ENCODE measurements at regions of chr14 and their contacts with region 1.

Region 1: GRCh38 chr14:24160850-24161804 is at the start of gene IRF9:
- DNase-seq: peak; percentile 99
- ATAC-seq: peak; percentile 88
- H3K4me3 Mint-ChIP-seq: peak within 1 kb of the TSS; percentile 91
- H3K27ac Mint-ChIP-seq: peak within 1 kb of the TSS; percentile 99
- H3K4me1 Mint-ChIP-seq: peaks cover 39% of the 10 kb centered on the region
- H3K27me3 Mint-ChIP-seq: no peaks in the 10 kb centered on the region
- CTCF ChIP-seq: peak; percentile 81
- total RNA-seq, gene IRF9: 112 to 118 TPM

Region 2: GRCh38 chr14:23366426-23366921 is 794.7 kb before region 1 on chr14:
- CTCF ChIA-PET with region 1: no interaction called
- POLR2A ChIA-PET with region 1: no interaction called
- intact Hi-C with region 1: no loop called
- DNase-seq: no peak
- ATAC-seq: no peak
- H3K4me3 Mint-ChIP-seq: no peak overlapping the region
- H3K27ac Mint-ChIP-seq: no peak overlapping the region
- H3K4me1 Mint-ChIP-seq: no peaks in the 10 kb centered on the region
- H3K27me3 Mint-ChIP-seq: peaks cover 25% of the 10 kb centered on the region
- CTCF ChIP-seq: no peak

Region 3: DNA sequence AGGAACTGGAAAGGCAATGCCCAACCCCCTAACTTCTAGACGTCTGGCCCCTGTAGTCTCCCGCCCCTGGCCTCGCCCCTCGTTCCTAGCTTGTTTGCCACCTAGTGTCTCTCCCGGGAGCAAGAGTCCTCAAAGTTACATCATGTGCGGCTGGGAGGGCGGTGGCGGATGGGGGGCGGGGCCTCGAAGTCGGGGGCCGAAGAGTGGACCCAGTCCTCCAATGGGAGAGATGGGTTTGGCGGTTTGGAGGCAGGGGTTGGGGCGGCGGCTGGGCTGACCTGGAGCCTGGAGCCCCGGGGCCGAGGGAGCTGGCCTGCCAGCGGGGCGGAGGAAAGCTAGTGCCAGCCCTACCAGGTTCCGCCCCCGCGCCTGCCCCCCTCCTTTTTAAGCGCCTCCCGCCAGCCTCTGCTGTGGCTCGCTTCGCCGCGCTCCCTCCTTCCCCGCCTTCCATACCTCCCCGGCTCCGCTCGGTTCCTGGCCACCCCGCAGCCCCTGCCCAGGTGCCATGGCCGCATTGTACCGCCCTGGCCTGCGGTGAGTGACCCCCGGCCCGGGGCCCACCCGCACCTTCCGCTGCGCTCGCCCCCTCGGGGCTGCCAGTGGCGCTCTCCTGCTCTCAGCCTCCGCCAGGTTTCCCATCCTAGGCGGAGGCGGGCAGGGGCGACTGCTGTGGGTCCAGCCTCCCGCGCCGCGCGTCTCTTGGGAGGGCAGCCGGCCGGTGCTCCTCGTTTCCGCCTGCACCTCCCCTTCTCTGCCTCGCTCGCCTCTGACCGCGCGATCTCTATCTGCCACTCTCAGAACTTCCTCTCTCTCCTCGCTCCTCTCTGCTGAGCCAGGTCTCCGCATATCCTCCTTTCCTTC is 67.0 kb before region 1 on chr14 and contains the start of gene PCK2:
- CTCF ChIA-PET with region 1: interaction called, 6 read pairs
- POLR2A ChIA-PET with region 1: interaction called, 25 read pairs
- intact Hi-C with region 1: no loop called
- DNase-seq: peak; percentile 91
- ATAC-seq: peak; percentile 75
- H3K4me3 Mint-ChIP-seq: peak within 1 kb of the TSS; percentile 93
- H3K27ac Mint-ChIP-seq: peak within 1 kb of the TSS; percentile 95
- H3K4me1 Mint-ChIP-seq: peaks cover 24% of the 10 kb centered on the region
- H3K27me3 Mint-ChIP-seq: no peaks in the 10 kb centered on the region
- CTCF ChIP-seq: no peak
- total RNA-seq, gene PCK2: 90.3 to 93.1 TPM

Region 4: GRCh38 chr14:24135834-24136542 is 25.1 kb before region 1 on chr14 and contains the start of gene PSME1:
- CTCF ChIA-PET with region 1: interaction called, 29 read pairs
- POLR2A ChIA-PET with region 1: interaction called, 38 read pairs
- intact Hi-C with region 1: no loop called
- DNase-seq: peak; percentile 96
- ATAC-seq: peak; percentile 97
- H3K4me3 Mint-ChIP-seq: peak within 1 kb of the TSS; percentile 97
- H3K27ac Mint-ChIP-seq: peak within 1 kb of the TSS; percentile 92
- H3K4me1 Mint-ChIP-seq: peaks cover 56% of the 10 kb centered on the region
- H3K27me3 Mint-ChIP-seq: no peaks in the 10 kb centered on the region
- CTCF ChIP-seq: no peak
- total RNA-seq, gene PSME1: 451 to 460 TPM

Region 5: DNA sequence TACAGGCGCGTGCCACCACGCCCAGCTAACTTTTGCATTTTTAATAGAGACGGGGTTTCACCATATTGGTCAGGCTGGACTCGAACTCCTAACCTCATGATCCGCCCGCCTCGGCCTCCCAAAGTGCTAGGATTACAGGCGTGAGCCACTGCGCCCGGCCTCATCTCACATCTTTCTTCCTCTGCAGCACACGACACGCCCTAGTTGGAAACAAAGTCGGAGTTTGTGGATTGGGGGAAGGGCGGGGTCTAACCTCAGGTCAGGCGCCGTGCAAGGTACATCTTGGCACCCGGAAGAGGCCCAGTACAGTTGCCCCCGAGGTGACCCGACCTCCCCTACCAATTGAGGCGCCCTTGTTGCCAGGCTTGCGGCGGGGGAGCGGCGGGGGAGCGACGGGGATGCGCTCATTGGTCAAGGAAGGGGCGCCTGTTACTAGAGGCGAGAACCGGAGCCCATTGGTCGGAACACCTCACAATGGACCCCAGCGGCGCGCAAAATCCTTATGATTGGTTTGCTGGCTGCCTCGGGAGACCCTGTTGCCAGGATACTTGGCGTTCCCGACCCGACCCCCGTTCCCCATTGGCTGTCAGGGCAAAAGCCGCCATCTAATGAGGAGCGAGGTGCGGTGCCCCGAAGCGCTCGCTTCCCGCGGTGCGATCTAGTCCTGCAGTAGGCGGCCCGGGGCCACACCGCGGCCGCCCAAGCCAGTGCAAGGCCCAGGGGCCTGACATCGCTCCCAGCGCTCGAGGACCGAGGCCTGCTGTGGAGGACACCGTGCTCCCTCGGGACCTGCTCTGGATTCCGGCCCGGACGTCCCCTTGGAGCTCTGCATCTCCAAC is 10.5 kb after region 1 on chr14 and contains the start of gene REC8:
- CTCF ChIA-PET with region 1: interaction called, 11 read pairs
- POLR2A ChIA-PET with region 1: interaction called, 90 read pairs
- intact Hi-C with region 1: no loop called
- DNase-seq: peak; percentile 87
- ATAC-seq: peak; percentile 89
- H3K4me3 Mint-ChIP-seq: peak within 1 kb of the TSS; percentile 77
- H3K27ac Mint-ChIP-seq: peak within 1 kb of the TSS; percentile 88
- H3K4me1 Mint-ChIP-seq: peaks cover 19% of the 10 kb centered on the region
- H3K27me3 Mint-ChIP-seq: no peaks in the 10 kb centered on the region
- CTCF ChIP-seq: no peak
- total RNA-seq, gene REC8: 25.0 to 32.9 TPM

Region 6: DNA sequence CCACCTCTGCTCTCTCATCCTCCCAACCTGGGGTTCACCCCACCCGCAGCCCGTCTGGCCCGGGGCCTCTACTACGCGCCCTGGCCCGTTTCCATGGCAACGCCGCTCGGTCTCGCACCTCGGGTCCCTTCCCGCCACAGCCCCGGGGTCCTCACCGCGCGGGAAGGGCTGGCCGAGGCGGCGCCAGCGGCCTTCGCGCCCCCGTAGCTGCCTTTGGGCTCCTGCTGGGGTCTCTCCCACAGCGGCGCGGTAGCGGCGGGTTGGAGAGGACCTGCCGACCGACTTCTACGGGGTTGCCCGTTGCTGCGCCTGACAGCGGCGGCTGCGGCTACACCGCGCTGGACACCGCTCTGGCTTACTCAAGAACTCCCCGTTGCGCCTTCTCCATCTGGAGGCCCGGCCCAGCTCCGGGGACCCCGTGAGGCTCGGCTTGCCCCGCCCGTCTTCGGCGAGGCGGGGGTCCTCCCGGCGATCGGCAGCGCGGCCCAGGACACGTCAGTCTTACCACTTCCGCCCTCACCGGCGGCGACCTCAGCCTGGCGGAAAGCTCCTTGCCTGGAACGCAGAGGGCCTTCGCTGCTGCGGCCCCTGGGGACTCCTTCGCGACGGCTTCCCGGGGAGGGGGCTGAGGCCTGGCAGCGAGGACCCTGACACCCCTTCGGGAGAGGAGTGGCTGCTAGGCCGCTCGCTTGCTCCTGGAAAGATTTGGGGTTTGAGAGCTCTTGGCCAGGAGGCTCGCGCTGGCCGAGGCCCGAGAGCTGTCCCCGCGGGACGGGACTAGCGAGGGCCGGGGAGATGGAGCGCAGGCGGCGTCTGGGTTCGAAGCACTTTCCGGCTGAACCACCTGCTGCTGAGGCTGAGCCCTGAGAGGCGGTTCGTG is 34.3 kb after region 1 on chr14 and contains the start of gene TM9SF1:
- CTCF ChIA-PET with region 1: interaction called, 15 read pairs
- POLR2A ChIA-PET with region 1: interaction called, 33 read pairs
- intact Hi-C with region 1: no loop called
- DNase-seq: peak; percentile 91
- ATAC-seq: peak; percentile 90
- H3K4me3 Mint-ChIP-seq: peak within 1 kb of the TSS; percentile 95
- H3K27ac Mint-ChIP-seq: peak within 1 kb of the TSS; percentile 98
- H3K4me1 Mint-ChIP-seq: peaks cover 50% of the 10 kb centered on the region
- H3K27me3 Mint-ChIP-seq: no peaks in the 10 kb centered on the region
- CTCF ChIP-seq: no peak
- total RNA-seq, gene TM9SF1: 16.3 to 18.0 TPM

Measured in activated CD8-positive, alpha-beta T cell treated with anti-CD3 and anti-CD28 coated beads for 36 hours (primary cell).